IMR-90 (cell line): ENCODE measurements at regions of chr15 and their contacts with region 1.

Region 1: GRCh38 chr15:79339564-79340314 is 28.8 kb downstream of the TMED3 start:
- DNase-seq: peak; percentile 60
- ATAC-seq: peak; percentile 93
- H3K4me3 ChIP-seq: no peak overlapping the region
- H3K27ac ChIP-seq: no peak overlapping the region
- H3K4me1 ChIP-seq: no peaks in the 10 kb centered on the region
- H3K27me3 ChIP-seq: no peaks in the 10 kb centered on the region
- CTCF ChIP-seq: peak; percentile 96
- POLR2A ChIP-seq: no peak
- RAD21 ChIP-seq: peak; percentile 85

Region 2: DNA sequence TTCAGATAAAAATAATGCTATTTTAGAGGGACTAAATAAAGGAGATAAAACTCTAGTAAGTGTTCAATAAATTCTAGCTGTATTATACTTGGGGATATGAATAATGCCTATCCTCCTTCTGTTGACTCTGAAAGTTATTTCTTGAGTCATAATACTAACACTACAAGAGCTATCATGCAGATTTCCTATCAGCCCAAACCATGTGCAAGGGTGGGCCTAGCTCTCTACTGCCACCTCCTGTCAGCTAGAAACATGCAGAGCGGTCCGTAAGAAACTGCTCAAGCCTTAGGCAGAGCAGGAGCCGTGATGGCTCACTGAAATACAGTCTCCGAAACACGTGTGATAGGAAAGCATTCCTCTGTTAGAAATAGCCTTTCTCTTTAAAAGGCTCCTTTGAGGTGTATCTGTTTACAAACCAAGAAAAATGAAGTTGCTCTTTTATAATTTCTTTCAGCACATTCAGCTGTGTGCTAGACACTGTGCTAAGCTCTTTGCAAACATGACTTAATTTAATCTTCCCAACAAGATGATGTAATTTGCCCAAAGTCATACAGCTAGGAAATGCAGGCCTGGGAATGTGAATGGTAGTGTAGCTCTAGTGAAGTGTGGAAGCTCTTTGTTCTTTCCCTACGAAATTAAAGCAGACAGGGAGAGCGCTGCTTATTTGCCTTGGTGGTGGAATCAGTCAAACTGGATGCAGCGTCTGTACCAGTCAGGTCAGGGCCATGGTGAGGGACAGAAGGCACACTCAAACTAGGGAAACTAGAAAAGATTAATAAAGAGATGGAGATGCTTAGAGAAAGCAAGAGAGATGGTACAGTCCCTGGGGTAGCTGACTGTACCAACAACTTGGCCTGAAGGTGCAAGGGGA is 514.0 kb after region 1 on chr15:
- CTCF ChIA-PET with region 1: interaction called, 43 read pairs
- POLR2A ChIA-PET with region 1: no interaction called
- dilution Hi-C with region 1: no loop called
- in situ Hi-C with region 1: loop called (anchors 10 kb)
- intact Hi-C with region 1: loop called (anchors 1 kb)
- DNase-seq: peak; percentile 93
- ATAC-seq: peak; percentile 100
- H3K4me3 ChIP-seq: no peak overlapping the region
- H3K27ac ChIP-seq: no peak overlapping the region
- H3K4me1 ChIP-seq: no peaks in the 10 kb centered on the region
- H3K27me3 ChIP-seq: no peaks in the 10 kb centered on the region
- CTCF ChIP-seq: peak; percentile 95
- POLR2A ChIP-seq: no peak
- RAD21 ChIP-seq: peak; percentile 90